GM10248 (cell line): ENCODE measurements at regions of chr1 and their contacts with region 1.

Region 1: GRCh38 chr1:40078512-40079333 is 18.3 kb downstream of the PPT1 start:
- DNase-seq: peak; percentile 69
- CTCF ChIP-seq: peak; percentile 70

Region 2: DNA sequence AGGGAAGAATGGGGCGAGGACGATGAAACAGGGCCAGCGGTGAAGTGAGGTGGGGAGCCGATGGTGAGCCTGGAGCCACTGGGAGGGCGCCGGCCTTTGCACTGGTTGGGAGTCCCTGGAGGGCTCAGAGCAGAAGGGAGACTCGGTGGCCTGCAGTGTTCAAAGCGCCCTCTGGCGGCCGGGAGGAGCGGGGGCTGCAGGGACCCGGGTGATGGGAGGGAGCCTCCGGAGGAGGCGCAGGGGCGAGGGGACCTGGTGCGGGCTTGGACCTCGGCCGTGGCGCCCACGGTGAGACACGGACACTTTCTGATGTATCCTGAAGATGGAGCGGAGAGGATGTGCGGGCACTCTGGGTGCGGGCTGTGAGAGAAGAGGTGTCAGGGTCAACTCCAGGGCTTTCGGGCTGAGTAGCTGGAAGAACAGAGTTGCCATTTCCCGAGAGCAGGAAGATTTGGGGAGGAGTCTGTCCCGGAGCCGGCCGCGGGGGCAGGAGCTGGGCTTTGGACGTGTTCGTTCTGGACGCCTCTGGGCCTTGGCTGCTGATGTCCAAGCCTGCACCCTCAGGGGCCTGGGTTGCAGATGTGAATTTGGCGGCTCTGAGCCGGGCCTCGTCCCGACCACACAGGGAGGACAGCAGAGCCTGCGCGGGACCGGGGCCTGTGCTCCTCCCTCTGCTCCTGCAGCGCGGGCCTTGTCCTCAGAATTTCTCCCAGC is 468.9 kb before region 1 on chr1:
- CTCF ChIA-PET with region 1: no interaction called
- POLR2A ChIA-PET with region 1: no interaction called
- DNase-seq: peak; percentile 88
- CTCF ChIP-seq: peak; percentile 65

Region 3: GRCh38 chr1:40059338-40059959 is 19.3 kb before region 1 on chr1:
- CTCF ChIA-PET with region 1: interaction called, 61 read pairs
- POLR2A ChIA-PET with region 1: no interaction called
- DNase-seq: no peak
- CTCF ChIP-seq: peak; percentile 32

Region 4: GRCh38 chr1:40064797-40065499 is 13.8 kb before region 1 on chr1:
- CTCF ChIA-PET with region 1: interaction called, 61 read pairs
- POLR2A ChIA-PET with region 1: no interaction called
- DNase-seq: peak; percentile 65
- CTCF ChIP-seq: no peak

Region 5: DNA sequence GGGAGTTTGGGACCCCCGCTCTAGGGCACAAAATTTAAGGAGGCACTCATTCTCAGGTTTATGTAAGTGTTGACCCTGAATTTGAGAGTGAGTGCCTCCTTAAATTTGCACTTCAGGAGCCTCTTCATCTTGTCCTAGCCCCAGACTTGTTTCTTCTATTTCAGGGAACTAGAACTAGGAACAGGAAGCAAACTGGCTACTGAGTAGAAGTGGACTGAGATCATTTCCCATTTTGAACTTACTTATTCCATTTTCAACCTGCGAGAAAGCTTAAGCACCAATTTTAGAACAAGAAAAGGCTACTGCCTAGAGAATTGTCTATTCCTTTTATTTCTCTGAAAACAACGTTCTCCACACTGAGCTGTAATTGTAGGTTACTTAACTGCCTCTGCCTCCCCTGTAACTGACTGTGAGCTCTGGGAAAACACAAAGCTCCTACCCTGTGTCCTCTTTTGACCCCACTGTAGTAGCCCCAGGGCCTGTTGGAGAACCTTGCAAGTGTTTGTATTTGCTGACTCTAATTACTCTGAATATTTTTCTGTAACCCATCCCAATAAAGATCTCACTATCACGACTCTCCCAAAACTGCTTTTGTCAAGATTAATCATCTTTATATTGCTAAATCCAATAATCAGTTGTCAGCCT is 15.9 kb after region 1 on chr1:
- CTCF ChIA-PET with region 1: interaction called, 51 read pairs
- POLR2A ChIA-PET with region 1: no interaction called
- DNase-seq: no peak
- CTCF ChIP-seq: no peak

Region 6: GRCh38 chr1:40122855-40123254 is 44.1 kb after region 1 on chr1:
- CTCF ChIA-PET with region 1: no interaction called
- POLR2A ChIA-PET with region 1: no interaction called
- DNase-seq: no peak
- CTCF ChIP-seq: no peak

Region 7: GRCh38 chr1:40210514-40211204 is 131.9 kb after region 1 on chr1:
- CTCF ChIA-PET with region 1: no interaction called
- POLR2A ChIA-PET with region 1: no interaction called
- DNase-seq: no peak
- CTCF ChIP-seq: no peak

Region 8: DNA sequence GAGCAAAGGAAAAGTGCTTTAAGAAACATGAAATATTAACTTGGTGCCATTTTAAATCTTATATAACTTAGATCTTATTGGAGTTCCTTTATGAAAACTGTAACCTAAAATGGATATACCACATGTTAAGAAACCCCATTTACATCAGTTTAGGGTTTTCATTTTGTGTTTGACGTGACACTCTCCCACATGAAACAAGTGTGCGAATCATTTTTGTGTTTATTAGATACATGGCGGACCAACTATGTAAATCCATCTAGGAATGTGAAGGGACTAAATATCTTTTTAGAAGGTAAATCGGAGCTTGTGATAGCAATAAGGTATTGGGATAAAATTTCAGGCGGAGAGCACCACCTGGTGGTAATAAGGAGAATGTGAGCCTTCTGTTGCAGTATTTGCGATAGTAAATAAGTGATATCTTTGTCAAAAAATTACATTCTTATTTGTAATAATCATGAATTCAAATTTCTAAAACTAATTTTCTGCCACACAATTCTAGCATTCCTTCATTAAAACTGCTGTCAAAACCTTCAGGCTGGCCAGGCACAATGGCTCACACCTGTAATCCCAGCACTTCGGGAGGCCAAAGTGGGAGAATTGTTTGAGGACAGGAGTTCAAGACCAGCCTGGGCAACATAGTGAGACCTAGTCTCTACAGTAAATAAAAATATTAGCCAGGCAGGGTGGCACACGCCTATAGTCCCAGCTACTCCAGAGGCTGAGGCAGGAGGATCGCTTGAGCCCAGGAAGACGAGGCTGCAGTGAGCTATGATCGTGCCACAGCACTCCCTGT is 326.1 kb after region 1 on chr1:
- CTCF ChIA-PET with region 1: interaction called, 11 read pairs
- POLR2A ChIA-PET with region 1: no interaction called
- DNase-seq: no peak
- CTCF ChIP-seq: peak; percentile 69

Region 9: DNA sequence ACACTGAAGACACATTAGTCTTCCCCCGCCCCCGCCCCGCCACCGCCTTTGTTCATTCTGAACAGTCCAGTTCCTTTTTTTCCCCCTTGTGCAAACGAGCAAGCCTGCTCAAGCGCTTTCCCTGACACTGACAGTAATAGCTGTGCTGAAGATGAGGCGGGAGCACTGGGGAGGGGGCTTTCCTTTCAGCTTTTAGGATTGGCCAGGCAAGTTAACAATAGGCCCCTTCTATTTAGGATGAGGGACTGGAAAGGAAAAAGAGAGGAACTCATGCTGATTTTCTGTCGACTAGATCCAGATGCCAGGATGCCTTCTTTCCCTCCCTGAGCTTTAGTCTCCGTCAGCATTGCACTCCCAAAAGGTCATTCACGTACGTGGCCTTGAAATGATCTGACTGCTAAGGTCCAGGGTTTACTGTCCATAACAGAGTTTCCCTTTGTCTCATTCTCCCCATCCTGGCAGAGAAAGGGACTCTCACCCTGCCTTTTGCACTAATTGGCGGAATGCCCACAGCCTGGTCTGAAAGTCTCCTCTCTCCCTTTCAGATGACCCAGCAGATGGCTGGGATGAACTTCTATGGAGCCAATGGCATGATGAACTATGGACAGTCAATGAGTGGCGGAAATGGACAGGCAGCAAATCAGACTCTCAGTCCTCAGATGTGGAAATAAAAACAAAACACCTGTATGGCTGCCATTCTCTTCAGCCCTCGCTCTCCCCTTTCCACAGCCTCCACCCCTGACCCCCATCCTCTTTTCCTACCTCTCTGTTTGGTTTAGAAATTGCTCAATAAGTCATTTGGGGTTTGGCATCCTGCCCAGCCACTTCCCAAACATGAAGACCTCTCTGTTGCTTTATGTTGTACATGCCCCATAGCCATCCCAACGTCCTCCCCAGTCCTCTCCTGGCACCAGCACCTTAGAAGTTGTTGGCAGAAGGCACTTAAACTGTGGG is 343.0 kb after region 1 on chr1:
- CTCF ChIA-PET with region 1: no interaction called
- POLR2A ChIA-PET with region 1: no interaction called
- DNase-seq: no peak
- CTCF ChIP-seq: no peak